ENCODE measurements at regions of chr15 and their contacts with region 1.

Region 1: GRCh38 chr15:74610302-74610951 is 5.2 kb upstream of the CLK3 start:
- DNase-seq: no peak
- ATAC-seq: no peak
- H3K4me3 Mint-ChIP-seq: no peak overlapping the region
- H3K27ac Mint-ChIP-seq: no peak overlapping the region
- H3K4me1 Mint-ChIP-seq: peaks cover 4% of the 10 kb centered on the region
- H3K27me3 Mint-ChIP-seq: no peaks in the 10 kb centered on the region

Region 2: DNA sequence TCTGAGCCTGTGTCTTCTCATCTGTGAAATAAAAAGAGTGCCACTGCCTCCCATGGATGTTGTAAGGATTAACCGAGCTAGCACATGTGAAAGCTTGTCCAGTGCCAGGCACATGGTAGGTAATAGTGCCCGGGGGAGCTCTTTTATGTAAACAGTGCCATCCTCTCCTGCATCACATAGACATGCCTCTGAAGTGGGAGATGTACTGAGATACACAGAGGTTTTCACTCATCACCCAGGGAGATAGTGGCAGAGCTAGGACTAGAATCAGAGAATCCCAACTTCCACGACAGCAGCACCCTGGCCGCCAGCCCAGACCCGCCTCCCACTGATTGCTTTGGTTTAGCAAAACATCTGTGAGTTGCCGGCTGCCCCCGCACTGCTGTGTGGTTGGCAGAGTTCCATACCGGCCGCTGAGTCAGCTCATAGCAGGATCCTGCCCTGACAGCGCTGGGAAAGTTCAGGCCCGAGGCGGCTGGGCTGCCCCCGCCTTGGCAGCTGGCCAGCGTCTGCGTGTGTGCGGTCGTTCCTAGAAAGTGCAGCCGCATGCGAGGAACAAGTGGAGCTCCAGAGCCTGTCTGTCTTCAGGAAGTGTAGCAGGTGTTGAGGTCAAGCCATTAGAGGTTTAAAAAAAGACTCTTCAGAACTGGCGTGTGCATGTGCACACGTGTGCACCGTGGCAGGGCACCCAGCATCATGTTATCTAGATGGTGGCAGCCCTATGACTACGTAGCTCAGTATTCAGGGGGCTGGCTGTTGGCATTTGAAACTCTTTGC is 64.4 kb before region 1 on chr15:
- CTCF ChIA-PET with region 1: interaction called, 13 read pairs
- POLR2A ChIA-PET with region 1: interaction called, 17 read pairs
- intact Hi-C with region 1: loop called in 1 of 2 experiments (anchors 1 kb)
- DNase-seq: peak; percentile 98
- ATAC-seq: peak; percentile 72
- H3K4me3 Mint-ChIP-seq: peak overlapping the region; percentile 29
- H3K27ac Mint-ChIP-seq: peak overlapping the region; percentile 44
- H3K4me1 Mint-ChIP-seq: peaks cover 62% of the 10 kb centered on the region
- H3K27me3 Mint-ChIP-seq: peaks cover 2% of the 10 kb centered on the region

Region 3: DNA sequence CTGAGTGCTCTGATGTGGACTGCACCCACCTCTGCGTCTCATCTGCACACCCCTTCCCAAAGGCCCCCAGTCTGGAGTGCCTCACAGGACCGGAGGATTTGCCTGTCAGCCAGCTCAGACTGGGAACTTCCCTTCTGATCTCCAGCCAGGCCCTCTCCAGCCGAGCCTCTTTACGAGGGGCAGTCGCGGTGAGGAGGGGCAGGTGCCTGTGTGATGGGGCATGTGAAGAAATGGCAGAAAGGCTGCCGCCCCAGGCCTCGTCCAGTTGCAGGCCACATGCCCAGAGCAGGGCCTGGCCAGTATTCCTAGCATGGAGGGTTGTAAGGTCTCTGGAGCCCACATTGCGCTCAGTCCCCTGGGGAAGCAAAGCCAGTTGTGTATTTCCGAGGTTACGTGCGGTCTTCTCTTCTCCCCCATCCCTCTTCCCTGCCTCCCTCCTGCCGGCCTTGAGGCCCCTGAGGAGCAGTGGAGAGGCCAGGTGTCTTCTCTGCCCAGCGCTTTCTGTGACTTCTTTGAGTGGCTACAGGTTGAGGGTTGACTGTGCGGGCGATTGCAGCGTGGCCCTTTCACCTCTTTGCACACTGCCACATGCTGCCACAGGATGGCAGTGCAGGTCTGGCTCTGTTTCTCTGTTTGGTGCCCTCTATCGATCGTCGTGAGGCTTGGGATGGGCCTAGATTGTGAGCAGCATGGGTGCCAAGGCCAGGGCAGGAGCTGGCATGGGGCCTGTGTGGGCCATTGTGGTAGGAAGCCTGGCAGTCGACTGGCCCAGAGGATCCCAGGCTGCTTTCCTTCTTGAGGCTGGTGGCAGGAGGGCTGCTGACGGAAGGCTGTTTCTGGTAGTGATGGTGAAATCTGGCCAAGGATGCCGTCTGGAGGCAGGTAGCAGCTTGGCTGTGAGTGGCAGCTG is 10.5 kb after region 1 on chr15:
- CTCF ChIA-PET with region 1: interaction called, 23 read pairs
- POLR2A ChIA-PET with region 1: no interaction called
- intact Hi-C with region 1: no loop called
- DNase-seq: peak; percentile 90
- ATAC-seq: peak; percentile 97
- H3K4me3 Mint-ChIP-seq: no peak overlapping the region
- H3K27ac Mint-ChIP-seq: peak overlapping the region; percentile 80
- H3K4me1 Mint-ChIP-seq: peaks cover 46% of the 10 kb centered on the region
- H3K27me3 Mint-ChIP-seq: no peaks in the 10 kb centered on the region

Region 4: DNA sequence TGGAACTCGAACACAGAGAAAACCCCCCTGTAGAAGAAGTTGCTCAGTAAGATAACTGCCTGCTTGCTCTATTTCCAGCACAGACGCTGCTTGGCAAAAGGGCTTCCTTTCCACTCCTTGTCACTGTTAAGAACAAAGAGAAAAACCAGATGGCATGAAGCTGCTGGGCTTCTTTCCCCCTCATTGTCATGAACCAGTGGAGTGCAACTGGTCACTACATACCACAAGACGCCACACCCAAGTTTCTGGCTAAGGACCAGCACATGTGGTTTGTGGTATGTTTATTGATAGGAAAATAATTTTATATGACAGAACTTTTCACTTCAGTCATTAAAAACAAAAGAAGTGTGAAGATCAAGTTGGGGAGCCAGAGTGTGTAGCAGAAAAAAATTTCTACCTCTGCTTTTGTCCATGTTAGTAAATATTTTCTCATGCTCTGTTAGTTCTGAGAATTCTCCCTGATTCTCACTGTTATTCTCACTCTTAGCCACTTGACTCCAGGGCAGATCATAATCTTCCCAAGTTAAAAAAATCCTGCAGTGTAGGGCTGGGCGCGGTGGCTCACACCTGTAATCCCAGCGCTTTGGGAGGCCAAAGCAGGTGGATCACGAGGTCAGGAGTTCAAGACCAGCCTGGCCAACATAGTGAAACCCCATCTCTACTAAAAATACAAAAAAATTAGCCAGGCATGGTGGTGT is 43.1 kb after region 1 on chr15:
- CTCF ChIA-PET with region 1: no interaction called
- POLR2A ChIA-PET with region 1: no interaction called
- intact Hi-C with region 1: no loop called
- DNase-seq: no peak
- ATAC-seq: no peak
- H3K4me3 Mint-ChIP-seq: no peak overlapping the region
- H3K27ac Mint-ChIP-seq: no peak overlapping the region
- H3K4me1 Mint-ChIP-seq: peaks cover 5% of the 10 kb centered on the region
- H3K27me3 Mint-ChIP-seq: no peaks in the 10 kb centered on the region

Region 5: DNA sequence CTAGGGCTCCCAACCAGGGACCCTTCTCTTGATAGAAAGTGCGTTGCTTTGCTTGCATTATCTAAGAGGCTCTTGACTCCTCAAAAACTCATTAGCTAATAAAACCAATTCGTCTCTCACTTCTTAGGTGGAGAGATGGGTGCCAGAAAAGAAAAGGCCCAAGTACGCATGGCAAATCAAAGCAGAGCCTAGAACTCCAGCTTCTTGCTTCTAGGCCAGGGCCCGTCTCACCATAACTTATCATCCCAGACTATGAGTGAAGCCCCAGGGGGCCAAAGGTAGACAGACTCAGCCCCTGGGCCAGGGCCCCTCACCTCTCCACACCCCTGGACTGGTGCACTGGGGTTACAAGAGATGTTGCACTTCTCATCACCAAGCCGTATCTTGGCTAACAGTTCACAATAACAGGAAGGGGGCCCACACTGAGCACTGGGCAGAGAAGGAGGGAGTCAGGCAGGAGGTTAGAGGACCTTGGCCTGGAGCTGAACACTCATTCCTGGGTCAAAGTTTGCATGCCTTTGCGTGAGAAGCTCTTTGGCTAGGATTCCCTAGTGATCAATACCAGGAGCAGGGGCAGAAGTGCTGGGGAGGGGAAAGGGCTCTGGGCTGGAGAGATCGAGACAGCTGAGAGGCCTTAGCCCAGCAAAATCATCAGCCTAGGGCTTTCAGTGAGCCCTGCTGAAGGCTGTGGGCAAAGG is 120.3 kb after region 1 on chr15:
- CTCF ChIA-PET with region 1: no interaction called
- POLR2A ChIA-PET with region 1: no interaction called
- intact Hi-C with region 1: no loop called
- DNase-seq: no peak
- ATAC-seq: no peak
- H3K4me3 Mint-ChIP-seq: no peak overlapping the region
- H3K27ac Mint-ChIP-seq: no peak overlapping the region
- H3K4me1 Mint-ChIP-seq: peaks cover 9% of the 10 kb centered on the region
- H3K27me3 Mint-ChIP-seq: peaks cover 15% of the 10 kb centered on the region